Activated CD4-positive, alpha-beta memory T cell treated with anti-CD3 and anti-CD28 coated beads, Interleukin-2, amount 10 ng/mL, durations not matched to agents 7 days and 5 days (primary cell): ENCODE measurements at regions of chr7 and their contacts with region 1.

Region 1: DNA sequence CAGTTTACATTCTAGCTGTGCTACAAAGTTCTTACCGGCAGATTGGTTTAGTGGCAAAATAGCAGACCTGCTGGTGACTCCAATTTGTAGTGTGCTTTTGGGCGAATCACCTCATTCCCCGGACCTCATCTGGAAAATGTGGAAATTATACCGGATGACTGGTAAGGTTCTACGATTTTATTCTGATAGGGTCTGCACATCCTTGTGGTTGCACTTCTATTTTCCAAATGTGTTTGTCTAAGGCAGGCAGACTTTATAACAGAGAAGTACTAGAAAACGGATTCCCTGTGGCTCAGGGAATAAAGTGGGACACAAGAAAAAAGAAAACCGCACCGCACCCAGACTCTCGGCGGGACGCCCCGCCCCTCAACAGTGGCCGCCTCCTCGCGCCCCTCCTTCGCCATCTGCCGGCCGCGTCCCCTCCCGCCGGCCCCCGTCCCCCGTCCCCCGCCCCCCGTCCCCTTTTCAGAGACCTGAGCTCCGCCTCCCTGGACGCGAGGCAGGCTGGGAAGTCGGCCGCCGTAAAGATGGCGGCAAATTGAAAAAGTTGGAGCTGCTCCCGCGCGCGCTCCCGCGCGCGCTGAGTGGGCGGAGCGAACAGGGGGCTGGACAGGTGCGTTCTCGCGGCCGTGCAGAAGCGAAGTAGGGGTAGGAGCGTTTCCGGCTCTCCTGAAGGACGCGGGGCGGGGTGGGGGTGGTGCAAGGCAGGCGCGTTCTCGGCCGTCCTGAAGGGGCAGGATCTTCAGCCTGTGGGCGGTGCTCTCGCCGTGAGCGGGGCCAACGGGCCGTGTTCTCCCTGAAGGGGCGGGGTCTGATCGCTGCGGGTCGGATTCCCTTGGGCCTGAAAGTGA is 531 bp upstream of the CCM2 start:
- DNase-seq: peak; percentile 100
- H3K4me3 Mint-ChIP-seq: peak overlapping the region; percentile 80
- H3K27ac Mint-ChIP-seq: peak overlapping the region; percentile 87
- H3K4me1 Mint-ChIP-seq: peaks cover 59% of the 10 kb centered on the region
- H3K27me3 Mint-ChIP-seq: no peaks in the 10 kb centered on the region

Region 2: DNA sequence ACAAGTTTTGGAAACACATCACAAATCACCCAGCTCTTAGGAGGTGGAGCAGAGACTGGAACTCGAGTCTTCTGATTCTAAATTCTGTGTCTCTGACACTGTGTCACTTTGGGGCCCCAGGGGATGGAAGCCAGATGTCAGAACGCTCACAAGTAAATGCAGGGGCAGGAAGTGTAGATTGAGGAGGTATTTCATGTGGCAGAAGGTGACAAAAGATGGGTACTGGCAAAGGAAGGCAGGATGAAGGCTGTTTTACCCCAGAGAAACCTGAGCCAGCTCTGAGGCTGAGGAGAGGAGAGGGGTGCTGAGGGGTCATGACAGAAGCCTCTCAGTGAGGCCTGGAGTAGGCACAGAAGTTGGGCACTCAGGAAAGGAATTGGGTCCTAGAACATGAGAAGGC is 108.1 kb before region 1 on chr7:
- CTCF ChIA-PET with region 1: no interaction called
- POLR2A ChIA-PET with region 1: no interaction called
- DNase-seq: peak; percentile 41
- H3K4me3 Mint-ChIP-seq: no peak overlapping the region
- H3K27ac Mint-ChIP-seq: peak overlapping the region; percentile 79
- H3K4me1 Mint-ChIP-seq: peaks cover 38% of the 10 kb centered on the region
- H3K27me3 Mint-ChIP-seq: no peaks in the 10 kb centered on the region

Region 3: GRCh38 chr7:44980393-44981034 is 19.0 kb before region 1 on chr7:
- CTCF ChIA-PET with region 1: interaction called, 88 read pairs
- POLR2A ChIA-PET with region 1: interaction called, 517 read pairs
- DNase-seq: peak; percentile 75
- H3K4me3 Mint-ChIP-seq: peak overlapping the region; percentile 99
- H3K27ac Mint-ChIP-seq: peak overlapping the region; percentile 96
- H3K4me1 Mint-ChIP-seq: peaks cover 76% of the 10 kb centered on the region
- H3K27me3 Mint-ChIP-seq: no peaks in the 10 kb centered on the region

Region 4: GRCh38 chr7:45013465-45013967 is 14.0 kb after region 1 on chr7:
- CTCF ChIA-PET with region 1: no interaction called
- POLR2A ChIA-PET with region 1: interaction called, 16 read pairs
- DNase-seq: no peak
- H3K4me3 Mint-ChIP-seq: no peak overlapping the region
- H3K27ac Mint-ChIP-seq: peak overlapping the region; percentile 7
- H3K4me1 Mint-ChIP-seq: peaks cover 28% of the 10 kb centered on the region
- H3K27me3 Mint-ChIP-seq: no peaks in the 10 kb centered on the region

Region 5: DNA sequence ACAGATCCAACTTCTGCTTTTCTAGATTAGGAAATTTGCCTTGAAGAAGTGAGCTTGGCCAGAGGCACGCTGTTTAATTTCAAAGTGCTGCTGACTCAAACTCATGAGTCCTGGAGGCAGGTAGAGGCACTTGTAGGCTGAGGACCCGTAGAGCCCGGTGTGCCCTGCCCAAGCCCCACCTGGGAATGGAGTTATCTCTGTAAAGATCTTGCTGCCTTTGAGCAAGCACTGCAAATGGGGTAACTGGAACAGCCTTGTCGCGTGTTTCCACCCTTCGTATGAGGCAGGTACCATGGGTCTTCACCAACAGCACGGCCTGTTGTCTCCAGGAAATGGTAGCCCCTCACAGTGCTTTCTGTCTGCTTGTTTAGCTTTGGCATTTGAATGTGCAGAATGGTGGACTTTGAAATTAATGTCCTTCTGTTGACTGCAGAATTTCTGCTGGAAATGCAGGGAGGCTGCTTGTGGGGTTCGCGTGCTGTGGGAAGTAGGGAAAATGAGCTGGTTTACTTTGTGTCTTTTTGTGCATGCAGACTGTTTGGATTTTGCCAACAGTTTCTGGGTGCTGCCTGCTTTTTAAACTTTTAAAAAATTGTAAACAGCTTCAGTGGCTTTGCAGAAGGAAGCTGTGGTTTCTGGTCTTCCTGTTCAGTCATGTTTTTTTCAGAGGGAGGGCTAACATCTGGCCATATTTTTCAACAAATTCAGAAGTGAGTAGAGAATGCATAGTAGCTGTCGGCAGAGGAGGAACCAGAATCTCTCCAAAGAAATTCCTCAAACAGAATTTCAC is 27.7 kb after region 1 on chr7:
- CTCF ChIA-PET with region 1: interaction called, 11 read pairs
- POLR2A ChIA-PET with region 1: interaction called, 166 read pairs
- DNase-seq: peak; percentile 46
- H3K4me3 Mint-ChIP-seq: peak overlapping the region; percentile 83
- H3K27ac Mint-ChIP-seq: peak overlapping the region; percentile 81
- H3K4me1 Mint-ChIP-seq: peaks cover 64% of the 10 kb centered on the region
- H3K27me3 Mint-ChIP-seq: no peaks in the 10 kb centered on the region

Region 6: DNA sequence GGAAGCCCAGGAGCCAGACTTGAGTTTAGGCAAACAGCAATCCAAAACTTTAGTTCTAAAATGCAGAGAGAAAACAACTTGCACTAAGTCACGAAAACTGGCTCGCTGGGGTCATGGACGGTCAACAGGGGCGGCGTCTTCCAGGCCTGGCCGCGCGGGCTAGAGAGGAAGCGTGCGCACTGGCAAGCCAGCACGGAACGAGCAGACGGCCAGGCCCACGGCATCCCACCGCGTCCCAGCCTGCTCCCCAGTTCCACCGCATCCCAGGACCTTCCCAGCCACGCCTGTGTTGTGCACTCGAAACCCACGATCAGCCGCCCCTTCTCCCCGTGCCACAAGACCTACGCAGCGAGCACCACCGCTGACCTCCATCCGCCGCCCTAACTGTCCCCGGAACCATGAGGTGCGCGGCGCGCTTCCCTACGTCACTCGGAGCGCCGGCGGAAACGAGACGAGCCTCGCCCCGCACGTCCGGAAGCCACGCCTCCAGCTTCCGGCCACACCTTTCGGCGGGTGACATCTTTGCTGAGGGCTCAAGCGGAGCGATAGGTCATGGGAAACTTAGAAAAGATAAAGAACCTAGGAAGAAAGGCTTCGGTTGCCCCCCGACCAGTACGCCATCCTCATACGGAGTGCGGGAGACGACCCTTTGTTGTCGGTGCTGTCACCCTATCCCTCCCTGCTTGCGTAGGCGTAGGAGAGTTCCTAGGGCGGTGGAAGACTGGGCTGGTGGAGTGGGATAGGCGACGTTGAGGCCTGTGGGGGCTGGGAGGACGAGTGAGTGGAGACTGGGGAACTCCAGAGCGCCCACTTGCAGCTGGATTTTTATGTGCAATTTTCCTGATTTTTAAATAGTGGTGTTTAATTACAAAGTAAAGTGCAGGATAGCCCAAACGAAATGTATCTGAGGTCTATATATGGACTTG is 112.1 kb after region 1 on chr7 and contains the start of gene TBRG4:
- CTCF ChIA-PET with region 1: interaction called, 4 read pairs
- POLR2A ChIA-PET with region 1: interaction called, 19 read pairs
- DNase-seq: peak; percentile 96
- H3K4me3 Mint-ChIP-seq: peak within 1 kb of the TSS; percentile 90
- H3K27ac Mint-ChIP-seq: peak within 1 kb of the TSS; percentile 89
- H3K4me1 Mint-ChIP-seq: peaks cover 50% of the 10 kb centered on the region
- H3K27me3 Mint-ChIP-seq: peaks cover 10% of the 10 kb centered on the region
- total RNA-seq, gene TBRG4: 98.8 to 103 TPM

Region 7: DNA sequence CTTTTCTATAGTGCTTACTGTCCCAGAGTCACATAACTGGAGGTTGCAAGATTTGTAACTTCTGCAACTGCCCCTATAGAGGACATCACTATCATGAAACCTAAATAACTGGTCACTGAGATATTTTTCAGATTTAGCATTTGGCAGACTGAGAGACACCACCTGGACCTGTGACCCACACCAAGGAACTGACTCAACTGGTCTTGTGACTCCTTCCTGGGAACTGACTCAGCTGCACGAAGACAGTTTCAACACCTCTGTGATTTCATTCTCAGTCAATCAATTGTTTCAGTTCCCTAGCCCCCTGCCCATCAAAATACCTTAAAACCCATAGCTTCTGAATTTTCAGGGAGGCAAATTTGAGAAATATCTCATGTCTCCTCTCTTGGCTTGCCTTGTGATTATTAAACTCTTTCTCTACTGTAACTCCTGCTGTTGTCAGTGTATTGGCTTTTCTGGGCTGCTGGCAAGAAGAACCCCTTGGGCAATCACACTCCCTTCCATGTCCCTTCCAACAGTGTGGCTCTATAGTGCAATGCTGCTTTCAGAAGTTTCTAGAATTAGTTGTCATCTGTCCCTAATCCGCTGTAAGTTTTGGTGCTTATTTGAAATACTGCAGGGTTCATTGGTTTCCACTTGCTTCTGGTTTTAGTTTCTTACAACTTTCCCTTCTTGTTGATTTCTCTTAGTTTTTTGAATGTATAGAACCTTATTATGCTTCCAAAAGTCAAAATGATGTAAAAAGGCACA is 446.9 kb after region 1 on chr7:
- CTCF ChIA-PET with region 1: no interaction called
- POLR2A ChIA-PET with region 1: no interaction called
- DNase-seq: no peak
- H3K4me3 Mint-ChIP-seq: no peak overlapping the region
- H3K27ac Mint-ChIP-seq: no peak overlapping the region
- H3K4me1 Mint-ChIP-seq: no peaks in the 10 kb centered on the region
- H3K27me3 Mint-ChIP-seq: peaks cover 3% of the 10 kb centered on the region